Aorta (tissue), 5 donors: ENCODE measurements at regions of chr19 and their contacts with region 1.

Region 1: DNA sequence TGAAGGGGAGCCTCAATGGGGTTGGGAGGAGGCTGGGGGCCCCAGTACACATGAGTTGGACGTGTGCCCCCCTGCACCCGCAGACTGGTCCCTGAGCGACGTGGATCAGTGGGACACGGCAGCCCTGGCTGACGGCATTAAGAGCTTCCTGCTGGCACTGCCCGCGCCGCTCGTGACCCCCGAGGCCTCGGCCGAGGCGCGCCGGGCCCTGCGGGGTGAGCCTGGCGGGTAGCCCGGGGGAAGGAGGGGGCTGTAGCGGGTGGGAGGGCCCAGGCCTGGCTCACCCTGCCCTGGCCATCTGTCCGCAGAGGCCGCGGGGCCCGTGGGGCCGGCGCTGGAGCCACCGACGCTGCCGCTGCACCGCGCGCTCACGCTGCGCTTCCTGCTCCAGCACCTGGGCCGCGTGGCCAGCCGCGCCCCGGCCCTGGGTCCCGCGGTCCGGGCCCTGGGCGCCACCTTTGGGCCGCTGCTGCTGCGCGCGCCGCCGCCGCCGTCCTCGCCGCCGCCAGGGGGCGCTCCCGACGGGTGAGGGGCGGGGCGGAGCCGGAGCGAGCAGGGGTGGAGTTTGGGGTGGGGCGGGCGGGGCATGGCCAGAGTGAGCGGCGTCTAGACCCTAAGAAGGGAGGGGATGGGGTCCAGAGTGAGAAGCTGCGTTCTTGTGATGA is 8.1 kb downstream of the PIK3R2 start:
- DNase-seq: peak; percentile 79 to 93
- ATAC-seq: peak; percentile 87
- H3K4me3 ChIP-seq: peak overlapping the region in 1 of 2 donors; percentile 29
- H3K27ac ChIP-seq: no peak overlapping the region
- H3K4me1 ChIP-seq: peaks cover 0 to 2% of the 10 kb centered on the region in 2 donors
- H3K27me3 ChIP-seq: no peaks in the 10 kb centered on the region

Region 2: DNA sequence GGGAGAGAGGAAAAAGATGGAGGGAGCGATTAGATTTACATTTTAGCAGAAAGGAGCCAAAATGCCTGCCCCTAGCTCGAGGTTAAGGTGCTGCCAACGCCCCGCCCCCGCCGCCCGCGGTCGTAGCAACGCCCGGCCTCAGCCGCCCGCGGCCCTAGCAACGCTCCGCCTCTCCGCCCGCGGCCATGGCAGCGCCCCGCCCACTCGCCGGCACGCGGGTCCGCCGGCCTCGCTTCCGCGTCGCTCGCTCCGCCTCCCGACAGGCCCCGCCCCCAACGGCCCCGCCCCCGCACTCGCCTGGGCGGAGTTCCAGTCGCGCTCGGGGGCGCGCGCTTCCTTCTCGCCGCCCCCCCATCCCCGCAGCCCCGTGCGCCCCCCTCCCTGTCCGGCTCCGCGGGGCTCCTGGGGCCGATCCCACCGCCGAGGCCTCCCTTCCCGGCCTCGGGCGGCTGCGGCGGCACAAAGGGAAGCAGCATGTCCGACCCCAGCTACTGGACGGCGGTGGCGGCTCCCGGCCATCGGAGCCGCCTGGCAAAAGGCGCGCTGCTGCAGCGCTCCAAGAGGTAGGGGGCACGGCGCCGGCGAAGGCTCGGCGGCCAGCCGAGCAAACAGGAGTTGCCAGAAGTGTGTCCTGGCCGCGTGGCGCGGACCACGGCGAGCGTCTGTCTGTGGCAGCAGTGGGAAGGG is 43.3 kb before region 1 on chr19:
- intact Hi-C with region 1: loop called in 1 of 2 experiments (anchors 5 kb)
- DNase-seq: peak; percentile 94 to 98
- ATAC-seq: peak; percentile 94
- H3K4me3 ChIP-seq: peak overlapping the region; percentile 46 to 72
- H3K27ac ChIP-seq: no peak overlapping the region
- H3K4me1 ChIP-seq: no peaks in the 10 kb centered on the region
- H3K27me3 ChIP-seq: no peaks in the 10 kb centered on the region